CD8-positive, alpha-beta T cell (primary cell): ENCODE measurements at regions of chr6 and their contacts with region 1.

Region 1: DNA sequence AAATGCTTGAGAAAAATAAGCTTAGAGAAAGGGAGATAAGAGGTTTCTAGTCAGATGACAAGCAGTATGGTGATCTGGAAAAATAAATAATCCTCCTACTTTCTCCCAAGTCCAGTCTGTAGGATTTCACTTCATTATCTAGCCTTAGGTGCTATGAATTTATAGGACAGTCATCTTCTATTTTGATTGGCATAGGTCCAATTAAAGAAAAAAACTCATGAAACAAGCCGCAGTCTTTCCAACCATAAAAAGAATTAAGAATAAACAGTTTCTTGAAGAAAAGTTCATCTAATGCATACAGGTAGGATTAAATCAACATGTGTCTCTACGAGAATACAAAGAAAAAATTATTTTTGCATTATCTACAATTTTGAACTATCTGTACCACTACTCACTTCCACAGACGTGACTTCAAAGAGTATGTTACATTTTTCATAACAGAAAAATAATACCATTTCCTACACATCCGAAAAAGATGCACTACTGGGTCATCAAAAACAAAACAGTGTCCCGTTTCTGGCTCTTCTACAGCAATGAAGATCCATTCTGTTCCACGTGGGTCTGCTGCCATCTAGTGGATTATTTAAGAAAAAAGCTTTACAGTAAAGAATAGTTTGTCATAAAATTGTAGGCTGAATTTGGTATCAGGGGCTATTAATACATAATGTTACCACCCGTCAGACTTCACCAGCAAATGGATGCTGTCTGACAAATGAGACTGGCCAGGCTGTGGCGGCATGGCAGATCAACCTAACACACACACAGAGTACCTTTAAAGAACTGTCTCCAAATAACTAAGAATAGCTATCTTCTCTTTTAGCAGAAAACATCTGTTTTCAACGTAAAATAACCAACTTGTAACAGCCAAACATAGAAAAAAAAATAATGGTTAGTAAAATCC is 28.9 kb downstream of the STX7 start:
- DNase-seq: peak in 6 of 9 experiments; percentile 12 to 78 (median 44)
- ATAC-seq: peak; percentile 71
- H3K4me3 ChIP-seq: no peak overlapping the region
- H3K4me3 Mint-ChIP-seq: no peak overlapping the region
- H3K27ac ChIP-seq: no peak overlapping the region
- H3K27ac Mint-ChIP-seq: no peak overlapping the region
- H3K4me1 ChIP-seq: no peaks in the 10 kb centered on the region
- H3K4me1 Mint-ChIP-seq: peaks cover 11% of the 10 kb centered on the region
- H3K27me3 ChIP-seq: no peaks in the 10 kb centered on the region
- H3K27me3 Mint-ChIP-seq: no peaks in the 10 kb centered on the region
- CTCF ChIP-seq: peak; percentile 90

Region 2: DNA sequence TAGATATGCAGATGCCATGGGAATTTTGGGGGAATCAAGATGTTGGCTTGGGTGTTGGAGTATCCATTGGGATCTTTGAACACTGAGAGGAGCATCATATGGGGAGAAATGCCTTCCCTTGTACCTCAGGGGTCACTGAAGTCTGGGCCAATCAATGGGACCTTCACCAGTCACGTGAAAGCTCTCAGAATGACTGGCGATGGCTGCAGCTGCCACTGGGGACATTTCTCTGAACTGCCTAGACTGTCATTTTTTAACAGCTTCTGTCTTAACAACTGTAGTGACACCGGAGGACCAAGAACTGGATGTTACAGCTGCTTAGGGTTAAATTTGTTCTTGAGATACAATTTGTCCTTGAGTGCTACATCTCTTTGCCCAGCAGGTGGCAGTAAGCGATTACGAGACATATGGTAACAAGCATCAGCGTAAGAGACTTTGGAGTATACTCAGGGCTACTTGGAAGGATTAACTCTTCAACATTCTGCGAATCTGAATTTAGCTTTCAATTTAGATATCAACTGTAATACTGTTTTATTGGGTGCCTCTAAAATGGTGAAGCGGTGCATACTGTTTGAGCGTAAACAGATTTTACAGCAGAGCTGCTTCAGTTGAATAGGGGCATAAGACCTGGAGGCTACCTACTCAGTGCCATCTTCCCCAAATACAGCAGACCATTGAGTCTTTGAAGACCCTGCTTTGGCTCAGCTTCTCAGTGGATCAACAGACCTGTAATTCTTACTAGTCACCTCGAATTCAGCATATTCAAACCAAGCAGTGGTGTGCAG is 568.9 kb before region 1 on chr6:
- CTCF ChIA-PET with region 1: no interaction called
- POLR2A ChIA-PET with region 1: no interaction called
- intact Hi-C with region 1: loop called (anchors 5 to 10 kb)
- DNase-seq: peak in 7 of 9 experiments; percentile 14 to 67 (median 37)
- ATAC-seq: peak; percentile 54
- H3K4me3 ChIP-seq: no peak overlapping the region
- H3K4me3 Mint-ChIP-seq: no peak overlapping the region
- H3K27ac ChIP-seq: no peak overlapping the region
- H3K27ac Mint-ChIP-seq: no peak overlapping the region
- H3K4me1 ChIP-seq: no peaks in the 10 kb centered on the region
- H3K4me1 Mint-ChIP-seq: peaks cover 4% of the 10 kb centered on the region
- H3K27me3 ChIP-seq: peaks cover 0 to 8% of the 10 kb centered on the region in 2 experiments
- H3K27me3 Mint-ChIP-seq: peaks cover 58% of the 10 kb centered on the region
- CTCF ChIP-seq: peak; percentile 67

Region 3: DNA sequence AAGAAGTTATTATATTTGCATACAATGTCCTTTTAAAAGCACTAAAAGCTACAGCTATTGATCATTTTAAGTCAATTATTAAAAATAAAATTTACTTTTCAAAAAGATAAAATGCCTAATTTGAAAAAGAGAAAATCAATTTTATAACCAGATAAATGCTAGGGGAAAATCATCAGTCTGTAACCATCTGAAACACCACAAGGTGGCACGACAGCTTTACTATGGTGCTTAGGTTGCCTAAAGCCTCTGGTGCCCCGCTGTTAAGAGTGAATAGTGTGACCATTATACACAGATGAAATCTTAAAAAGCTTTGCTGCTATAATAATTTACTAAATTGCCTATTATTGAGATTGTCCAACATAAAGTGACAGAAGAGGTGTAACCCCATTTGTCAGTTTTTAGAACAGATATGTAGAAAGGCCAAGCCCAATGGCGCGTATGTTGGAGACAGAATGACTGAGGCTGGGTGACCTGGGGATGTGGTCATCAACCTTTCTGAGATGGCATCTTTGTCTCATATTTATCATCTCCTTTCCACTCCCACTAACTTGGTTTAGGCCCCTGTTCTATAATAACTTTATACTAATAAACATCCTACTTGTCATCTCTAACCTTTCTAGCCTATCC is 183.6 kb before region 1 on chr6:
- CTCF ChIA-PET with region 1: interaction called, 10 read pairs
- POLR2A ChIA-PET with region 1: no interaction called
- intact Hi-C with region 1: loop called (anchors 1 to 5 kb)
- DNase-seq: peak in 2 of 9 experiments; percentile 35 to 39
- ATAC-seq: no peak
- H3K4me3 ChIP-seq: no peak overlapping the region
- H3K4me3 Mint-ChIP-seq: no peak overlapping the region
- H3K27ac ChIP-seq: no peak overlapping the region
- H3K27ac Mint-ChIP-seq: no peak overlapping the region
- H3K4me1 ChIP-seq: no peaks in the 10 kb centered on the region
- H3K4me1 Mint-ChIP-seq: no peaks in the 10 kb centered on the region
- H3K27me3 ChIP-seq: no peaks in the 10 kb centered on the region
- H3K27me3 Mint-ChIP-seq: peaks cover 13% of the 10 kb centered on the region
- CTCF ChIP-seq: peak; percentile 24

Region 4: GRCh38 chr6:132495604-132496079 is 11.6 kb after region 1 on chr6:
- CTCF ChIA-PET with region 1: interaction called, 16 read pairs
- POLR2A ChIA-PET with region 1: no interaction called
- intact Hi-C with region 1: no loop called
- DNase-seq: no peak
- ATAC-seq: no peak
- H3K4me3 ChIP-seq: no peak overlapping the region
- H3K4me3 Mint-ChIP-seq: no peak overlapping the region
- H3K27ac ChIP-seq: peak overlapping the region in 1 of 2 experiments; percentile 21
- H3K27ac Mint-ChIP-seq: no peak overlapping the region
- H3K4me1 ChIP-seq: peaks cover 1% of the 10 kb centered on the region
- H3K4me1 Mint-ChIP-seq: peaks cover 41% of the 10 kb centered on the region
- H3K27me3 ChIP-seq: no peaks in the 10 kb centered on the region
- H3K27me3 Mint-ChIP-seq: no peaks in the 10 kb centered on the region
- CTCF ChIP-seq: no peak